Activated CD4-positive, alpha-beta memory T cell treated with anti-CD3 and anti-CD28 coated beads for 36 hours (primary cell): ENCODE measurements at regions of chr2 and their contacts with region 1.

Region 1: DNA sequence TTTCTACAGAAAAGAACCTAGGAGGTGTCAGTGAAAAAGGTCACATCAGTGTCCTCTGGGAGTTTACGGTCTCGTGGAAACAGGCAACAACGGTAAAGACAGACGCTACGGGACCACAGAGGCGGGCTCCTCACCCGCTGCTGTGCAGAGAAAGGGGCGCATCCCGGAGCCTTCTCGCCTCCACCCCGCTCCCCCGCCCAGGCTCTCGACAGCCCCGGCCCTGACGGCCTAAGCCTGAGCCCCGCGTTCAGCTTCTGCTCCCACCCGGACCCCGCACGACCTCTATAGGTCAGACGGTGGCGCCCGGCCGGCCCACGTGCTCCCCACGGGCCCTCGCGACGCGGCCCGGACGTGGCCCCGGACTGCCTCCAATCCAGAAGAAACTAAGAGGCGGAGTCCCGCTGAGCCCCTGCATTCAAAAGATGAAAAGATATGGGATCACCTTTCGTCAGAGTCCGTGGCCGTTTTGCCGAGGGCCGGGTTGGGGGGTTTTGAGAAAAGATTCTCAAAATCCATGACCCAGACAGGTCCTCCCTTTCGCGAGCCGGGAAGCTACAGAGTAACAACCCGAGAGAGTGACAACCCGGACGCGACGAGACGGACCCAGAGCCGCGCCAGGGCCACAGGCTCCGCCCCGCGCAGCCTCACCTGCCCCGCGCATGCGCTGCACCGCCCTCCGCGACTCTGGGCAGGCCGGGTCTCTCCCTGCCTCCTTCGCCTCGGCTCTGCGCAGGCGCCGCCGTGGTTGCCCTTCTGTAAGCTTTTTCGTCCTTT is at the start of gene ZC3H8:
- DNase-seq: peak; percentile 97
- H3K4me3 Mint-ChIP-seq: peak within 1 kb of the TSS; percentile 78
- H3K27ac Mint-ChIP-seq: peak within 1 kb of the TSS; percentile 87
- H3K4me1 Mint-ChIP-seq: peaks cover 21% of the 10 kb centered on the region
- H3K27me3 Mint-ChIP-seq: no peaks in the 10 kb centered on the region
- total RNA-seq, gene ZC3H8: 13.0 to 16.0 TPM

Region 2: DNA sequence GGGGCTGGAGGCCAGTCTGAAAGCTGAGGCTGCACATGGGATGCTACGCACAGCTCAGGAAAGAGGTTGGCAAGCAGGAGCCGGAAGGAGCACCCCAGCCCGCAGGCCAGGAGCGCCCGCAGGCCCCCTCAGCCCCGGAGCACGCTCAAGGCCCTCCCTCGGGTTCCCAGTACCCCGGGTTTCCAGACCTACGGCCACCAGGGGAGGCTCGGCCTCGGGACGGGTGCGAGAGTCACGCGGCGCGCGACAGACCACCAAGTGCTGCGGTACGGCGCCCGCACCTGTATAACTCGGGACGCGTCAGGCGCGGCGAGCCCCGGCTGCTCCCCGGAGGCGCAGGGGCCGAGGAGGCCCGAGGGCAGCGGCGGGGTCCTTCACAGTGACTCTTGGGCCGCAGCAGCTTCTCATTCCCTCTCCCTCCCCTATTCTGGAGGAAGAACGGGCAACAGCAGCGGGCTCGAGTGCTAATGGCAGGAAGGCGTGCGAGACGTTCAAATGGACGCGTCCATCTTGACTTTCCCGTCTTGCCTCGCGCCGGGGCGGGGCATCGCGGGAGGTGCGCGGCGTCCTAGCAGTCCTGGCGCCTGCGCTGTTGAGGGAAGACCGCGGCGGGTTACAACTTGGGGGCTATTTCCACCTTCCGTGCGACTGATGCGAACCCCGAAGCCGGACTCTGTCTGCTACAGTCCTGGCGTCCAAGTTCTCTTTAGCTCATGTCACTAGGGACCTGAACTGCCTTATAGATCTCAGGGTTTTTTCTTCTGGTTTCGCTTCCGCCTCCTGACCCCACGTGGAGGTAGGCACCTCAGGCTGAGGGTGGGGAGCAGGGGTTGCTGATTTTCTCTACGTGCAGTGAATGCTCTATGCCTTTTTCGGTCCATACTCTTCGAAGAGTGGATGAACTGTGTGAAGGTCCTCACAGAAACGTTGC is 370.7 kb before region 1 on chr2 and contains the start of gene ANAPC1:
- CTCF ChIA-PET with region 1: interaction called, 3 read pairs
- POLR2A ChIA-PET with region 1: no interaction called
- intact Hi-C with region 1: loop called (anchors 5 kb)
- DNase-seq: peak; percentile 90
- H3K4me3 Mint-ChIP-seq: peak within 1 kb of the TSS; percentile 97
- H3K27ac Mint-ChIP-seq: peak within 1 kb of the TSS; percentile 94
- H3K4me1 Mint-ChIP-seq: peaks cover 15% of the 10 kb centered on the region
- H3K27me3 Mint-ChIP-seq: no peaks in the 10 kb centered on the region
- total RNA-seq, gene ANAPC1: 88.8 to 90.2 TPM

Region 3: DNA sequence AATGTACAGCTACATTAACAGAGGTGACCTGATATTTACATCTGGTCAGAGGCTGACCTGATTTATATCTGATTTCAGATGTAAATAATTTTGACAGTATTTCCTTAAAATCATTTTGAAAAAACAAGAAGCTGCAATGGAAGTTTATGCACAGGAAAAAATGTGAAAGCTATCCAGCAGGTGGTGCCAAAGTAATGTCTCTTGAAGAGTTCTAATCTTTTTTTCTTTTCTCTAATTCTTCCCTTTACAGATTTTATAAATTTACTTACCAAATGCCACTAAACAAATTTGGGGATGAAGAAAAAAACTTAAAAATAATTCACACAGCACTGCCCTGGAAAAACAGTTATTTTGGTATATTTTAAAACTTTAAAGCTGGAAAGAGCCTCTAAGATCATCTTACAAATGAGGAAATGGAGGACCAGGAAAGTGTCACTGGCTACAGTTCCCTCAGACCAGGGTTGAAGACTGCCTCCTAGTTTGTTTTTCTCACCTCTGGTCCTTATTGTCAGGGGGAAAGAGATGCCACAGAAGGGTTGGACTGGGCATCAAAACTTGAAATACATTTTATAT is 132.9 kb before region 1 on chr2:
- CTCF ChIA-PET with region 1: interaction called, 18 read pairs
- POLR2A ChIA-PET with region 1: interaction called, 3 read pairs
- intact Hi-C with region 1: loop called (anchors 5 kb)
- DNase-seq: peak; percentile 22
- H3K4me3 Mint-ChIP-seq: no peak overlapping the region
- H3K27ac Mint-ChIP-seq: no peak overlapping the region
- H3K4me1 Mint-ChIP-seq: peaks cover 7% of the 10 kb centered on the region
- H3K27me3 Mint-ChIP-seq: no peaks in the 10 kb centered on the region

Region 4: DNA sequence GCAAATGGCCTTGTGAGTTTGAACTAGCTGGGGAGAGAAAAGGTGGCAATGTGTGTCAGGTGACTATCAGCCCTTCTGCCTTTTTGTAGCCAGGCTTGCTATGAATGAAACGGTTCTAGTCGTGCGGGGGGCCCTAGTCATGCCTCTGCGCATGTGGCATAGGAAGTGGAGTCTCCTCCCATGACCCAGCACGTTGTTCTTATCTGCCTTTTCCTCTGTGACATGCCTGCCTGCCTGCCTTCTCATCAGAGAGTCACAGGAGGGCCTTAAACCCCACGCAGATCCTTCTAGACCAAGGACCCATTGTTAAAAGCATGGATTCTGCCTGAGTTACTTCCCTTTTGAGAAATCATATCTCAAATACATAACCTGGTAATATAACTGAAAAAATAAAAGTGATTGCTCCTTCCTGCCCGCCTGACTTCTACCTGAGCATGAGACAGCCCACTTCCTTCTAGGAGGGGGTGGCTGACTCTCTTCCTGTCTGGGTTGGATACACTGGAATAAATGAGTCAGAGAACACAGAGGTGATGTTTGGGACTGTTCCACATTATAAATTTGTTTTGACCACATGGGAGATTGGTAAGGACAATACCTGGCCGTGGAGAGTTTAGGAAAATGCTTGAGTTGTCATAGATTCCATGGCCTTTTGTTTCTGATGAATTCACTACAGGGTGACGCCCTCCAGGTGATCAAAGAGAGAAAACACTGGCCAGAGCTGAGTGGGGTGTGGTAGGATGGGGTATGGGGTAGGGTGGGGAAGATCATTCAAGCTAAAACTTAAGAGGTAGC is 66.7 kb before region 1 on chr2:
- CTCF ChIA-PET with region 1: interaction called, 9 read pairs
- POLR2A ChIA-PET with region 1: interaction called, 4 read pairs
- intact Hi-C with region 1: loop called (anchors 2 kb)
- DNase-seq: peak; percentile 91
- H3K4me3 Mint-ChIP-seq: peak overlapping the region; percentile 38
- H3K27ac Mint-ChIP-seq: peak overlapping the region; percentile 94
- H3K4me1 Mint-ChIP-seq: peaks cover 85% of the 10 kb centered on the region
- H3K27me3 Mint-ChIP-seq: no peaks in the 10 kb centered on the region

Region 5: DNA sequence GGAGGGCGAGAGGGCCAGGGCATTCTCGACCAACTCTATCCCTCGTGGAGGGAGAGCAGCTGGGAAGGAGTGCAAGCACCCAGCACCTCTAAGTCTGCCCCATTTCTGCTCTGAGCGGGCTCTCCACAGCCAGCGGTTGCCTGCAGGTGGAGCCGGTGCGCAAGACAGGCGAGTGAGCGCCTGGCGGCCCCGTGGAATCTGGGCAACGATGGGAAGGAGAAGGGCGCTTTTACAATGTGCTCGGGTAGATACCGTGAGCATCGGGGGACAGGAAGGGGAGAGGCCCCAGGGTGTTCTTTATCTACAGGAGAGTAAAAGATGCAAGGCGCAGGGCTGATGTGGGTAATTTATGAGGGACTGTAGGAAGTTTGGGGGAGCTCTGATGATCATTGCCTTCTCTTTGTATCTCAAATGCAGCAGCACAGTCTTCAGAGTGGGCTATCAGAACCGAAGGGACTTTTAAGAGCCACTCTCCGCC is 226.4 kb after region 1 on chr2:
- CTCF ChIA-PET with region 1: interaction called, 6 read pairs
- POLR2A ChIA-PET with region 1: interaction called, 3 read pairs
- intact Hi-C with region 1: loop called (anchors 5 kb)
- DNase-seq: peak; percentile 92
- H3K4me3 Mint-ChIP-seq: peak overlapping the region; percentile 81
- H3K27ac Mint-ChIP-seq: peak overlapping the region; percentile 77
- H3K4me1 Mint-ChIP-seq: peaks cover 28% of the 10 kb centered on the region
- H3K27me3 Mint-ChIP-seq: no peaks in the 10 kb centered on the region

Region 6: DNA sequence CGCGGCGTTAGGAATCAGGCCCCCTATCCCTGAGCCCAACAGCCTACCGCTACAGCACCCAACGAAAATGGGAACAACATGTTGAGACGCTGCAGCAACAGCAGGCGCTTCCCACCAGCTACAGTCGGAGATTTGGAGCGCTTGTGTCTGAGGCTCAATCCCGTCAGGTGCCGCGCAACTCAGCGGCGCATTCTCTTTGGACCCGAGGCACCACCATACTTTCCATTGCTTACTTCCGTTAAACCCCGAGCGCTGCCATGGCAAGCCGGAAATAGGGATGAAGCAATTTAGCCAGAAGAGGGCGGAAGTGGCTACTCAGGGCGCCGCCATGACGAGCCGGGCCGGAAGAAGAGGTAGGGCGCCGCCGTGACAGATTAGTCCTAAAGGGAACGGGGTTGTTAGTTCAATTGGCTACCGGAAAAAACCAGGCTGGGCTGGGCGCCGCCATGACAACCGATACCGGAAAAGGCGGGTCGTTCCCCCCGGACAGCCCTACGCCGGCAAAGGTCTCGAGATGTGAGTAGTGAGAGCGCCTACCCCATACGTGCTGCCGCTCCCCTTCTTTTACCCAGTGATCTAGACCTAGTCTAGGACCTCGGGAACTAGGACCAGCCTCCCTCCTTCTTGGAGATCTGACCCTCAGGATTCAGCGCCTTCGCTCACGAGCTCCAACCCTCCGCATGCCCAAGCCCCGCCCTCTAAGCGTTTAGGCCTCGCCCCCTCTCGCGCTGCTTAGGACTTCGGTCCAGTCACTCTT is 329.7 kb after region 1 on chr2 and contains the start of gene CHCHD5:
- CTCF ChIA-PET with region 1: no interaction called
- POLR2A ChIA-PET with region 1: no interaction called
- intact Hi-C with region 1: loop called (anchors 2 kb)
- DNase-seq: peak; percentile 97
- H3K4me3 Mint-ChIP-seq: peak within 1 kb of the TSS; percentile 97
- H3K27ac Mint-ChIP-seq: peak within 1 kb of the TSS; percentile 99
- H3K4me1 Mint-ChIP-seq: peaks cover 30% of the 10 kb centered on the region
- H3K27me3 Mint-ChIP-seq: no peaks in the 10 kb centered on the region
- total RNA-seq, gene CHCHD5: 39.3 to 41.4 TPM

Region 7: DNA sequence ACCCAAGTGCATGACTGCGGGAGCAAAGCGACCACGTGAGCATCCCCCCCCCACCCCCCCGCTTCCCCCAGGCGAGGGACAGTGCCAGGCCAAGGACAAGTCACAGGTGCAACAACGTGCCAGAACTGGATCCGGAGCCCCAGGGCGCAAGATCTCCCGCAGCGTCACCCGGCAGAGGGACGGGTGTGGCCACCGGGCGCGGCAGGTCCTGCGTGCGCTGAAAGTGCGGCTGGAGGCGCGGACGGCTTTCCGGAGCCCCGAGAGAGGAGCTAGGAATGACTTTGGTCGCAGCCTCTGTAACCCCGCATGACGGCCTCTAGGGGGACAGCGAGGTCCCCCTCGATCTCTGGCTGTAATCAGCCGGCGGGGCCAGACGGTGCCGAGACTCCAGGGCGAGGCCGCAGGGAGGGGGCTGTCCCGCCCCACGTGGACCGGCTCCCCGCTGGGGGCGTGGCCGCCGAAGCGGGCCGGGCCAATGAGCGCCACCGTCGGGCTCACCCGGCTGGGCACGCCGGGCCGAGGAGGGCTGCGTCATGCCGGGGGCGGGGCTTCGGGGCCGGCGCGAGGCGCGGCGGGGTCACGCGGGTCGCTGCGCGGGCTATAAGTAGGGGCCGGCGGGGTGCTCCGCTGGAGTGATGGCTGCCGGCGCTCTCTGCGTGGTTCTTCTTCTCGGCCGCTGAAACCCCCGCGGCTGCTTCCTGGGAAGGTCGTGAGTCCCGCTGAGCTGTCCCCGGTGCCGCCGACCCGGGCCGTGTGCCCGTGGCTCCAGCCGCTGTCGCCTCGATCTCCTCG is 390.9 kb after region 1 on chr2 and contains the start of gene SLC20A1:
- CTCF ChIA-PET with region 1: no interaction called
- POLR2A ChIA-PET with region 1: no interaction called
- intact Hi-C with region 1: no loop called
- DNase-seq: peak; percentile 98
- H3K4me3 Mint-ChIP-seq: peak within 1 kb of the TSS; percentile 97
- H3K27ac Mint-ChIP-seq: peak within 1 kb of the TSS; percentile 87
- H3K4me1 Mint-ChIP-seq: peaks cover 52% of the 10 kb centered on the region
- H3K27me3 Mint-ChIP-seq: no peaks in the 10 kb centered on the region
- total RNA-seq, gene SLC20A1: 88.8 to 91.3 TPM